Adrenal gland (tissue), 19 donors: ENCODE measurements at regions of chr1 and their contacts with region 1.

Region 1: GRCh38 chr1:210143465-210144062 is 89.0 kb upstream of the SERTAD4 start:
- DNase-seq: peak; percentile 49 to 92 (median 81)
- H3K4me3 ChIP-seq: no peak overlapping the region
- H3K27ac ChIP-seq: no peak overlapping the region
- H3K4me1 ChIP-seq: no peaks in the 10 kb centered on the region
- H3K27me3 ChIP-seq: no peaks in the 10 kb centered on the region
- CTCF ChIP-seq: peak; percentile 41 to 69 (median 58)
- POLR2A ChIP-seq: no peak

Region 2: GRCh38 chr1:210311726-210312493 is 168.3 kb after region 1 on chr1:
- intact Hi-C with region 1: loop called in 1 of 2 experiments (anchors 5 kb)
- DNase-seq: peak in 2 of 7 donors; percentile 30 to 32
- H3K4me3 ChIP-seq: peak overlapping the region in 1 of 4 donors; percentile 23
- H3K27ac ChIP-seq: peak overlapping the region in 2 of 5 donors; percentile 21 to 71
- H3K4me1 ChIP-seq: peaks cover 5% of the 10 kb centered on the region in 2 donors
- H3K27me3 ChIP-seq: no peaks in the 10 kb centered on the region
- CTCF ChIP-seq: no peak
- POLR2A ChIP-seq: no peak